ENCODE measurements at regions of chr5 and their contacts with region 1.

Region 1: DNA sequence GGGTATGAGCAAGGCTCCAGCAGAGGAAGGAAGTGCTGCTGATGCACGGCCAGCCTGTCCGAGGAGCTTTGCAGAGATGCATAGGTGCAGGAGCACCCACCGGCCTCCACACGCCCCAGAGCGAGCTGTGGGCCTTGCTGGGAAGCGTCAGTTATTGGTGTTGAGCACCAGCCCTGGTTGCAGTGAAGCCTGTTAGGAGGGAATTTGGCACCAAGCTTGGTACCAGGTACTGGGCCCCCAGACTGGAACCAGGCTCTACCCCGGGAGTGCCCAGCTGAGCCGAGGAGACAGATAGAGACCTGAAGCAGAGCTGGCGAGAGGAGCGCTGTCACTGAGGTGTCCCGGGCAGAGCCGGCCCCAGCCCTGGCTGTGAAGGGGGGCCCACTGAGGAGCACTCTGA is 5.2 kb downstream of the TCF7 start:
- DNase-seq: no peak
- H3K4me3 ChIP-seq: no peak overlapping the region
- H3K27ac ChIP-seq: no peak overlapping the region
- H3K4me1 ChIP-seq: peaks cover 0 to 20% (median 14%) of the 10 kb centered on the region in 4 experiments
- H3K27me3 ChIP-seq: peaks cover 0 to 30% (median 2%) of the 10 kb centered on the region in 5 experiments

Region 2: DNA sequence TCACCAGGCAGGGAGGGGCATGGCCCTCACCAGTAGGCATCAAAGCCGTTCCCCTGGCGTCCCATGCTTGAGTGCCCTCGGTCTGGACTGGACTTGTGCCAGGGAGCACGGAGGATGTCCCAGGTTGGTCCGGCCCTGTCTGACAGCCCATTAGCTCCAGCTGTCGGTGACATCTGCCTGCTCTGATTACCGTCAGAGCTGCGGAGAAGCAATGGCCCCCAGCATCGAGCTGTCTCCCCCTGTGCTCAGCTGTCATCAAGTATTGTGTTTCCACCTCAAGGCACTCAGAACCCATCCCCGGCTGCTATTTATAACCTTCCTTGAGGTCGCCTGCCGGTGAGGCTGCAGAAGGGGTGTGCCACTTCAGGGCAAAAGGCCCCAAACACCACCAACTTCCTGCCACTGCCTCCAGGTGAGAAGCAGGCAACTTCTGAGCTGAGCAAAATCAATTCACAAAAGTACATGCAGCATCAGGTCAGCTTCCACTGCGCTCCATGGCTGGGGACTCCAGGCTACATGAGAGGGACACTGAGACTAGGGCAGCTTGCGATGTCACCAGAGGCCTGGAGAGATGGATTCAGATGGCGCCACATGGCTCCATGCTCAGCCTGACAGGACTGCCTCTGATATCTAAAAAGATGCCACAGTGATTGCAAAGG is 294.0 kb before region 1 on chr5:
- CTCF ChIA-PET with region 1: no interaction called
- POLR2A ChIA-PET with region 1: no interaction called
- DNase-seq: no peak
- H3K4me3 ChIP-seq: no peak overlapping the region
- H3K27ac ChIP-seq: no peak overlapping the region
- H3K4me1 ChIP-seq: peaks cover 0 to 3% (median 0%) of the 10 kb centered on the region in 4 experiments
- H3K27me3 ChIP-seq: peaks cover 0 to 4% (median 0%) of the 10 kb centered on the region in 5 experiments

Region 3: GRCh38 chr5:134132372-134133034 is 12.8 kb after region 1 on chr5:
- CTCF ChIA-PET with region 1: interaction called, 59 read pairs
- POLR2A ChIA-PET with region 1: no interaction called
- DNase-seq: peak; percentile 46 to 92 (median 90)
- H3K4me3 ChIP-seq: no peak overlapping the region
- H3K27ac ChIP-seq: peak overlapping the region in 1 of 2 experiments; percentile 46
- H3K4me1 ChIP-seq: peaks cover 0 to 30% (median 21%) of the 10 kb centered on the region in 4 experiments
- H3K27me3 ChIP-seq: no peaks in the 10 kb centered on the region